ENCODE measurements at regions of chr11 and their contacts with region 1.

Region 1: GRCh38 chr11:123707606-123708205 is 33.8 kb downstream of the ZNF202 start:
- DNase-seq: peak; percentile 71
- ATAC-seq: peak; percentile 74
- H3K4me3 Mint-ChIP-seq: no peak overlapping the region
- H3K27ac Mint-ChIP-seq: no peak overlapping the region
- H3K4me1 Mint-ChIP-seq: peaks cover 8% of the 10 kb centered on the region
- H3K27me3 Mint-ChIP-seq: peaks cover 2% of the 10 kb centered on the region; the same call in 1 of the 2 replicates
- CTCF ChIP-seq: no peak

Region 2: DNA sequence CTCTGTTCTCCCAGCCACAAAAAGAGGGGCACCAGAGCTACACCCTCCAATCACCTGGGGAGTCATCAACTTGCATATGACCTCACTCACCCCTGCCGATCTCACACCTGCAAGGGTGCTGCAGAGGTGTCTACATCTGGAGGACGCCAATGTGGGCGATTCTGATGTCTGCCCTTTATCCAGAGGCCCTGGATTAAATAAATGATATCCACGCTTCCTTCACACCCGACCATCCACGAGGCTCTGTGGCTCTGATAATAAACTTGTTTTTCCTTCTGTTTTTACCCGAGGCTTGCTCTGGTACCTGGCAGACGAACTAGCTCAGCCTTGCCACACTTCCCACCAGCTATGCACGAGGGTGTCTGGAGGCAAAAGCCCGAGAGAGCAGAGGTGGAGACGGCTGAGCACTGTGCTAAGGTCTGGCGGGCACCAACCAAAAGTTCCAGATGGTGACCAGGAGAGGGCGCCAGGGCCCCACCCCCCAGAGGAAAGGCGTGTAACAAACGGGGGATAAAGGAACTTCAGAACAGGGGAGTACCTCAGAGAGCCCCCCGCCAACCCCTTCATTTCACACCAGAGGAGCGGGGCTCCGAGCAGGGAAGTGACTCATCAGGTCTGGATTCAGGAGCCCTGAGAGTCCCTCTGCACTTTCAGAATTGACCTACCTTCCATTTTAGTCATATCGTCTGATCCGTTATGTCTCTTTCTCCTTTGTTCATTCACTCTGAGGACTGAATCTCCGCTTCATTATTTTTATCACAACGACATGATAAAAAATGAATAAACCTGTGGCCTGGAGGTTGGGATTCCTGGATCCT is 66.8 kb before region 1 on chr11:
- CTCF ChIA-PET with region 1: interaction called, 153 read pairs
- POLR2A ChIA-PET with region 1: no interaction called
- DNase-seq: peak; percentile 77
- ATAC-seq: peak; percentile 93
- H3K4me3 Mint-ChIP-seq: no peak overlapping the region
- H3K27ac Mint-ChIP-seq: no peak overlapping the region
- H3K4me1 Mint-ChIP-seq: peaks cover 31% of the 10 kb centered on the region
- H3K27me3 Mint-ChIP-seq: no peaks in the 10 kb centered on the region; the same call in 1 of the 2 replicates
- CTCF ChIP-seq: peak; percentile 84

Region 3: DNA sequence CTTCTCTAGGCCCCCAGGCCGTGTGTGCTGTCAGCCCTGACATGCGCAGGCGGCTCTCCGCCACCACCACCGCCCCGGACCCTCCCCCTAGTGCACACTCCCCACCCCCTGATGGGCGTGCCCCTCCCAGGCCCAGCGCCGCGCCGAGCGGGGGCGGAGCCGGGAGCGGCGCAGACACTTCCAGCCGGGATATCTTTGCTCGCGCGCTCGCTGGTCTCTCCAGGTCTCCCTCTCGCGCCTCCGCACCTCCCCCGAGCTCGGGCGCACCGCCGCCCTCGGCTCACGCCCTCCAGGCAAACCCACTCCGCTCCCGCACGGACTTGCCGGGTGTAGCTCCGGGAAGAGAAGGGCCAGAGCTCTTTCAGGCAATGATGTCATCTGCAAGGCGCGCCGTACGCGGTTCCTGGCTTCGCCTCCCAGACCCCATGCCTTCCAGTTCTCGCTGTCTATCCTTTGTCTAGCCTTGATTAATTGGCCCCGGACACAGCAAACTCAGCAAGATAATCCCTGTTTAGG is 53.1 kb before region 1 on chr11 and contains the start of gene SCN3B:
- CTCF ChIA-PET with region 1: interaction called, 42 read pairs
- POLR2A ChIA-PET with region 1: no interaction called
- DNase-seq: peak; percentile 79
- ATAC-seq: peak; percentile 87
- H3K4me3 Mint-ChIP-seq: peak within 1 kb of the TSS; percentile 76
- H3K27ac Mint-ChIP-seq: no peak within 1 kb of the TSS
- H3K4me1 Mint-ChIP-seq: peaks cover 14% of the 10 kb centered on the region
- H3K27me3 Mint-ChIP-seq: peaks cover 49% of the 10 kb centered on the region
- CTCF ChIP-seq: no peak
- total RNA-seq, gene SCN3B: 0.37 to 0.79 TPM (median 0.71 TPM) in 3 replicates

Region 4: GRCh38 chr11:123672568-123672967 is 35.1 kb before region 1 on chr11:
- CTCF ChIA-PET with region 1: interaction called, 13 read pairs
- POLR2A ChIA-PET with region 1: no interaction called
- DNase-seq: no peak
- ATAC-seq: no peak
- H3K4me3 Mint-ChIP-seq: no peak overlapping the region
- H3K27ac Mint-ChIP-seq: no peak overlapping the region
- H3K4me1 Mint-ChIP-seq: peaks cover 8% of the 10 kb centered on the region
- H3K27me3 Mint-ChIP-seq: no peaks in the 10 kb centered on the region
- CTCF ChIP-seq: no peak

Region 5: DNA sequence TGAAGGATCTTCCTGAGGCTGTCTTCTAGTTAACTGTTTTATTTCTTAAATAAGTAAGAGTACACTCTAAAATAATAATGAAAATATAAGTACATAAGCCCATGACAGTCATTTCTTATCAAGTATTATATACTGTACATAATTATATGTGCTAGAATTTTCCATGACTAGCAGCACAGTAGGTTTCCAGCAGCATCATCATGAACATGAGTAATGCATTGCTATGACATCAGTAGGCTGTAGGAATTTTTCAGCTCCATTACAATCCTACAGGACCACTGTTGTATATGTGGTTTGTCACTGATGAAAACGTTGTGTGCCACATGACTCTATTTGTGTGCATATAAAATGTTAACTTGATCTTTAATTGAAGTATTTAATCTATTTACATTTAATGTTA is 11.7 kb after region 1 on chr11:
- CTCF ChIA-PET with region 1: interaction called, 11 read pairs
- POLR2A ChIA-PET with region 1: no interaction called
- DNase-seq: no peak
- ATAC-seq: no peak
- H3K4me3 Mint-ChIP-seq: no peak overlapping the region
- H3K27ac Mint-ChIP-seq: no peak overlapping the region
- H3K4me1 Mint-ChIP-seq: no peaks in the 10 kb centered on the region
- H3K27me3 Mint-ChIP-seq: no peaks in the 10 kb centered on the region
- CTCF ChIP-seq: no peak